Activated B cell treated with CpG ODN at 0.5 μM for 24 hours (primary cell): ENCODE measurements at regions of chr1 and their contacts with region 1.

Region 1: DNA sequence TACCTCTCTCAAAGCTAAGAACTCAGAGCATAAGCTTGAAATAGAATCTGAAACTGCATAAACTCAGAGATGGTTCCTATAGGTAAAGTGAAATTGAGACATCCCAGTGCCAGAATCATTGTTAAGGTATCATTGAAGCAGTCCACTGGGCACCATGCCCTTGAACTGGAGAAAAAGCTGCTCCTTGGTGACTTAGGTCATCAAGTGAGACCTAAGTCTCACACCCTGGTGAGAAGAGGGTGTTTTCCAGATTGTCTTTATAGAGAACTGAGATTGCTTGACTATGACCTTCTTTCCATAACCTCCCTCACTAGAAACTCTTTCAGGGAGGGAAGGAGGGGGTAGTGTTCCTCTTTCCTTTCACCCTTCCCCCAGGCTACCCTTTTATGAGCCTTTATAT is 9.4 kb upstream of the ATP6V1G3 start:
- DNase-seq: no peak
- ATAC-seq: peak; percentile 90
- H3K4me3 Mint-ChIP-seq: peak overlapping the region; percentile 63
- H3K27ac Mint-ChIP-seq: peak overlapping the region; percentile 89
- H3K4me1 Mint-ChIP-seq: peaks cover 67% of the 10 kb centered on the region
- H3K27me3 Mint-ChIP-seq: no peaks in the 10 kb centered on the region
- CTCF ChIP-seq: no peak

Region 2: GRCh38 chr1:198472113-198472512 is 77.8 kb before region 1 on chr1:
- CTCF ChIA-PET with region 1: no interaction called
- POLR2A ChIA-PET with region 1: no interaction called
- intact Hi-C with region 1: no loop called
- DNase-seq: no peak
- ATAC-seq: no peak
- H3K4me3 Mint-ChIP-seq: no peak overlapping the region
- H3K27ac Mint-ChIP-seq: no peak overlapping the region
- H3K4me1 Mint-ChIP-seq: peaks cover 2% of the 10 kb centered on the region
- H3K27me3 Mint-ChIP-seq: no peaks in the 10 kb centered on the region
- CTCF ChIP-seq: no peak

Region 3: DNA sequence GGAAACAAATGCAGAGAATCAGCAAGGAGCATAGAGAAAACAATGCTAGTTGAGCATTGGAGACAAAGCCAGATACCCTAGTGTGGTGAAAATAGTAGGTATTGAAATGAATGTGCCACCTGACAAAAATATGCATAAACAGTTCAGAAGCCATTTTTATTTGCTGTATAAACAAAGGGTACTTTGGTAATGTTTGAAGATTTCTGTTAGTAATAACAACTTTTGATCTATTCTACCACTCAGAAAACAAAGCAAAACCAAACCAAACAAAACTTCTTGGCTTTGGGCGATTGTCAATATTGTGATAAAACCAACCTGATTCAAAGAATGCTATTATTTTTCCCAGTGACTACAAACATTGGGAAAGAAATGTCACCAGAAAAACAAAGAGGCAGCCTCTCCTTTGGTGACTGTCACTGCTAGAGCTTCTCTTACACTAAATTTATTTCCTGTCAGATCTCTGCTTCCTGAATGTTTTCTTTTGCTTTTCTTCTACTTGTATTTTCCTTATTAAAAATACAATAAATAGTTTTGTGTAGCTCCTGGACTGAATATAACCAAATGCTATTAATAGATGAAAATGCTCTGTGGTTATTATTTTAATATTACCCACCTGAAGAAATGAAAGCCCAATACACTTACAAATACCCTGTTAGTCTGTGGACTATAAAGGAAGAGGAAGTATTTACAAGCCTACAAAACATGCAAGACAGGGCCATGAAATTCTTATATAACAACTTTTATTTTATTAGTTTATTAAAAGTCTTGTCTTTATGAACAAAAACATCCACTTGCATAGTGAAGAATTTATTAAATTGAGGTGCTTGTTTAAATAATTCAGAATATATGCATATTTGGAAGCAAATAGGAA is 15.1 kb before region 1 on chr1:
- CTCF ChIA-PET with region 1: interaction called, 3 read pairs
- POLR2A ChIA-PET with region 1: interaction called, 7 read pairs
- intact Hi-C with region 1: loop called (anchors 1 kb)
- DNase-seq: no peak
- ATAC-seq: peak; percentile 56
- H3K4me3 Mint-ChIP-seq: peak overlapping the region; percentile 55
- H3K27ac Mint-ChIP-seq: peak overlapping the region; percentile 80
- H3K4me1 Mint-ChIP-seq: peaks cover 84% of the 10 kb centered on the region
- H3K27me3 Mint-ChIP-seq: no peaks in the 10 kb centered on the region
- CTCF ChIP-seq: no peak

Region 4: GRCh38 chr1:198664068-198664788 is 114.4 kb after region 1 on chr1:
- CTCF ChIA-PET with region 1: no interaction called
- POLR2A ChIA-PET with region 1: no interaction called
- intact Hi-C with region 1: no loop called
- DNase-seq: no peak
- ATAC-seq: peak; percentile 48
- H3K4me3 Mint-ChIP-seq: peak overlapping the region; percentile 71
- H3K27ac Mint-ChIP-seq: peak overlapping the region; percentile 91
- H3K4me1 Mint-ChIP-seq: peaks cover 81% of the 10 kb centered on the region
- H3K27me3 Mint-ChIP-seq: no peaks in the 10 kb centered on the region
- CTCF ChIP-seq: no peak